ENCODE measurements at regions of chr15 and their contacts with region 1.

Region 1: GRCh38 chr15:82262422-82263026 is at the starts of genes EFL1 and SAXO2:
- DNase-seq: peak; percentile 83 to 87 (median 87)
- H3K4me3 ChIP-seq: peak within 1 kb of the TSS; percentile 72 to 91 (median 77)
- H3K4me3 Mint-ChIP-seq: peak within 1 kb of the TSS; percentile 82 to 93
- H3K27ac ChIP-seq: peak within 1 kb of the TSS; percentile 56 to 89
- H3K27ac Mint-ChIP-seq: peak within 1 kb of the TSS; percentile 85 to 94 (median 90)
- H3K4me1 ChIP-seq: peaks cover 11 to 16% of the 10 kb centered on the region in 2 donors
- H3K4me1 Mint-ChIP-seq: peaks cover 28% of the 10 kb centered on the region
- H3K27me3 ChIP-seq: no peaks in the 10 kb centered on the region
- H3K27me3 Mint-ChIP-seq: peaks cover 0 to 3% (median 0%) of the 10 kb centered on the region in 3 donors
- CTCF ChIP-seq: no peak
- polyA plus RNA-seq, gene EFL1: 5.2 to 10.0 (median 7.1) TPM
- polyA plus RNA-seq, gene SAXO2: not detected

Region 2: GRCh38 chr15:82046666-82047452 is 215.7 kb before region 1 on chr15:
- intact Hi-C with region 1: loop called in 1 of 2 experiments (anchors 10 kb)
- DNase-seq: peak; percentile 86 to 89 (median 88)
- H3K4me3 ChIP-seq: peak overlapping the region; percentile 80 to 85 (median 82)
- H3K4me3 Mint-ChIP-seq: peak overlapping the region; percentile 93
- H3K27ac ChIP-seq: peak overlapping the region; percentile 78 to 82
- H3K27ac Mint-ChIP-seq: peak overlapping the region; percentile 76 to 94 (median 90)
- H3K4me1 ChIP-seq: peaks cover 26 to 40% of the 10 kb centered on the region in 2 donors
- H3K4me1 Mint-ChIP-seq: peaks cover 22% of the 10 kb centered on the region
- H3K27me3 ChIP-seq: peaks cover 8 to 32% of the 10 kb centered on the region in 2 donors
- H3K27me3 Mint-ChIP-seq: peaks cover 27 to 42% (median 27%) of the 10 kb centered on the region in 3 donors
- CTCF ChIP-seq: peak; percentile 77

Region 3: GRCh38 chr15:82183121-82184033 is 79.1 kb before region 1 on chr15:
- intact Hi-C with region 1: no loop called
- DNase-seq: no peak
- H3K4me3 ChIP-seq: no peak overlapping the region
- H3K4me3 Mint-ChIP-seq: no peak overlapping the region
- H3K27ac ChIP-seq: no peak overlapping the region
- H3K27ac Mint-ChIP-seq: no peak overlapping the region
- H3K4me1 ChIP-seq: peaks cover 7 to 8% of the 10 kb centered on the region in 2 donors
- H3K4me1 Mint-ChIP-seq: peaks cover 6% of the 10 kb centered on the region
- H3K27me3 ChIP-seq: no peaks in the 10 kb centered on the region
- H3K27me3 Mint-ChIP-seq: no peaks in the 10 kb centered on the region
- CTCF ChIP-seq: no peak

Region 4: DNA sequence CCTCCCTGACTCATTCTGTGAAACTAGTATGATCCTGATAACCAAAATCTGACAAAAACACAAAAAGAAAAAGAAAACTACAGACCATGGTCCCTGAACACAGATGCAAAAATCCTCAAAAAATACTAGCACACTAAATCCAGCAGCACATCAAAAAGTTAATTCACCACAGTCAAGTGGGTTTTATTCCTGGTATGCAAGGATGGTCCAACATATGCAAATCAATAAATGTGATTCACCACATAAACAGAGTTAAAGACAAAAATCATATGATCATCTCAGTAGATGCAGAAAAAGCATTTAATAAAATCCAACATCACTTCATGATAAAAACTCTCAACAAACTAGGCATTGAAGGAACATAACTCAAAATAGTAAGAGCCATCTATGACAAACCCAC is 12.9 kb after region 1 on chr15:
- intact Hi-C with region 1: no loop called
- DNase-seq: no peak
- H3K4me3 ChIP-seq: no peak overlapping the region
- H3K4me3 Mint-ChIP-seq: no peak overlapping the region
- H3K27ac ChIP-seq: no peak overlapping the region
- H3K27ac Mint-ChIP-seq: no peak overlapping the region
- H3K4me1 ChIP-seq: no peaks in the 10 kb centered on the region
- H3K4me1 Mint-ChIP-seq: no peaks in the 10 kb centered on the region
- H3K27me3 ChIP-seq: peaks cover 0 to 2% of the 10 kb centered on the region in 2 donors
- H3K27me3 Mint-ChIP-seq: peaks cover 0 to 6% (median 0%) of the 10 kb centered on the region in 3 donors
- CTCF ChIP-seq: no peak

Region 5: DNA sequence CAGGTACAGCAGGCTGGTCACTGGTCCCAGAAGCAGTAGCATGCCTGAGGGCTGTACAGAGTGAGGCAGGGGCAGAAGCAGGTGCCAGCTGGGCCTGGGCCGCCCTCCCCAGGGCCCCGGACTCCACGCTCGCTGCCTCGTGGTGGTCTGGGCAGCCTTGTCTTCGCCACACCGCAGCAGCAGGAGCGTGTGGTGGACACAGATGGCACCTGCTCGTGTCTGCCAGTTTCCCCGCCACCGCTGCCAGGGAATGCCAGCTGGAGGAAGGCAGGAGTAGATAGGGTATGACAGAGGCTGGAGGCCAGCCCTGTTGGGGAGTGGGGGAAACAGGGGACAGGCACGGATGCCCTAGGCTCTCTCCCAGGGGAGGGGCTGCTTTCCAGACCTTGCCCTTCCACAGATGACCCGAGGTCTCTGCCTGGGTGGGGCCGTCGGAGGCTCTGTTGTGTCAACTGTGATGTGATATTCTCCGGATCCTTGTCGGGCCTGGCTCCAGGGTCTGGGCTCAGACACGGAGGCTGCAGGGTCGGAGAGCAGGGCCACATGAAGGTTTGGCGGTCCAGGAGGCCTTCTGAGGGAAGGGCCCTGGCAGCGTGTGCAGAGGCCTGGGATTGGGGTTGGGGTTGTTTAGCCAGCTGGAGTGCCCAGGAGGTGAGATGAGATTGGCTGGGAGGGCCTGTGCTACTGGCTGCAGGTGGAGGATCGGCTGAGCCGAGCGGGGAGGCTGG is 53.2 kb after region 1 on chr15:
- intact Hi-C with region 1: no loop called
- DNase-seq: no peak
- H3K4me3 ChIP-seq: no peak overlapping the region
- H3K4me3 Mint-ChIP-seq: no peak overlapping the region
- H3K27ac ChIP-seq: no peak overlapping the region
- H3K27ac Mint-ChIP-seq: peak overlapping the region in 1 of 7 donors; percentile 62
- H3K4me1 ChIP-seq: no peaks in the 10 kb centered on the region
- H3K4me1 Mint-ChIP-seq: no peaks in the 10 kb centered on the region
- H3K27me3 ChIP-seq: no peaks in the 10 kb centered on the region
- H3K27me3 Mint-ChIP-seq: peaks cover 1 to 5% (median 2%) of the 10 kb centered on the region in 3 donors
- CTCF ChIP-seq: no peak

Region 6: DNA sequence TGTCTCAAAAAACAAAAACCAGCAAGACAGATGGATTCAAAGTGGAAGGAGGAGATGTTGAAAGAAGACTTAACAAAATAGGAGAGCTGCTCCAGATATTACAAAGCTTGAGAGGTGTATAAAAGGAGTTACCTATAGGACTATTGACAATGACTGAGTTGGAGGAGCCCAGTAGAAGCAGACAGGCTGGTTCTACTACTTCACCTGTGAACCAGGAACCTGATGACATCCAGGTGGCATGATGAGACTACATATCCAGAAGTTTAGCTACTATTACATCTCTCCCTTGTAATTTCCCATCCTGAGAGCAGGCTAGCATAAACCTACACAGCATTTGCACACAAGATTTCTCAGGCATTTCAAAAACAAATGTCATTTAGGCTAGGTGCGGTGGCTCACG is 335.3 kb after region 1 on chr15:
- intact Hi-C with region 1: no loop called
- DNase-seq: no peak
- H3K4me3 ChIP-seq: no peak overlapping the region
- H3K4me3 Mint-ChIP-seq: no peak overlapping the region
- H3K27ac ChIP-seq: no peak overlapping the region
- H3K27ac Mint-ChIP-seq: no peak overlapping the region
- H3K4me1 ChIP-seq: no peaks in the 10 kb centered on the region
- H3K4me1 Mint-ChIP-seq: no peaks in the 10 kb centered on the region
- H3K27me3 ChIP-seq: peaks cover 0 to 5% of the 10 kb centered on the region in 2 donors
- H3K27me3 Mint-ChIP-seq: peaks cover 9 to 20% (median 14%) of the 10 kb centered on the region in 3 donors
- CTCF ChIP-seq: no peak